ENCODE measurements at regions of chr1 and their contacts with region 1.

Region 1: GRCh38 chr1:225777583-225778336 is at the start of gene SRP9:
- DNase-seq: peak; percentile 99 to 100 (median 100)
- H3K4me3 ChIP-seq: peak within 1 kb of the TSS; percentile 81 to 99 (median 98)
- H3K27ac ChIP-seq: peak within 1 kb of the TSS; percentile 79 to 92
- H3K4me1 ChIP-seq: peaks cover 0 to 11% (median 5%) of the 10 kb centered on the region in 3 donors
- H3K27me3 ChIP-seq: no peaks in the 10 kb centered on the region
- CTCF ChIP-seq: peak; percentile 82
- total RNA-seq, gene SRP9: 199 TPM

Region 2: GRCh38 chr1:225554216-225554812 is 223.4 kb before region 1 on chr1:
- intact Hi-C with region 1: loop called (anchors 10 kb)
- DNase-seq: peak in 2 of 5 donors; percentile 34 to 37
- H3K4me3 ChIP-seq: no peak overlapping the region
- H3K27ac ChIP-seq: no peak overlapping the region
- H3K4me1 ChIP-seq: no peaks in the 10 kb centered on the region
- H3K27me3 ChIP-seq: no peaks in the 10 kb centered on the region
- CTCF ChIP-seq: peak; percentile 52

Region 3: DNA sequence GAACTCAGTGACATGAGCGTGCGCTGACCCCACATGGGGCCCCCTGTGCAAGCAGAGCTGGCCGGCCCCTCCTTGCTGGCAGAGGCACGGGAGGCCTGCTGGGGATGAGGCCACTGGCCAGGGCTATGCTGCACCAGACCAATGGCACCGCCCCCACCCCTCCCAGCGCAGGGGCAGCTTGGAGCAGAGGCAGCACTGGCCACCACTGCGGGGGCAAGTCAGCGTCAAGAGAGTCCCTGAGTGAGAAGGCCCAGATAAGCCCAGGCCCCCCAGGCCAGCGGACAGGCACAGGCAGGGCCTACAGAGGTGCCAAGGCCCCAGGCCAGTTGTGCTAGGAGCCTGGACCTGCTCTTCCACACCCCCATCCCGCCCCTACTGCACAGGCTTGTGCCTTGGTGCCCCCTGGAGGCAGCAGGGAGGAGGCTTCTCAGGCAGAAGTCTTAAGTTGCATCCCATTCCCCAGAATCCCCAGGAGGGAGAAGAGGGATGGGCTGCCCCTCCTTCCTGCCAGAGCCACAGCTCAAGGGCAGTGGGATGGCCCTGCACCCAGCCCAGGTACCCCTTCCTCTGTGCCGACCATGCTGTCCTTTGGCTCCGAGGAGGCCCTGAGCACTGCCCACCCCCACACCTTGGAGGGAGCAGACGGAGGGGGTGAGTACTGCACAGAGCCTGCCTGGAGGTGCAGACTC is 68.0 kb after region 1 on chr1:
- intact Hi-C with region 1: no loop called
- DNase-seq: peak; percentile 79 to 90 (median 84)
- H3K4me3 ChIP-seq: no peak overlapping the region
- H3K27ac ChIP-seq: no peak overlapping the region
- H3K4me1 ChIP-seq: no peaks in the 10 kb centered on the region
- H3K27me3 ChIP-seq: no peaks in the 10 kb centered on the region
- CTCF ChIP-seq: peak; percentile 67

Measured in kidney (tissue), 22 donors.